Endothelial cell of umbilical vein (primary cell): ENCODE measurements at regions of chr12 and their contacts with region 1.

Region 1: GRCh38 chr12:96164951-96165811 is 29.0 kb upstream of the ELK3 start:
- DNase-seq: peak; percentile 98
- H3K4me3 ChIP-seq: no peak overlapping the region
- H3K27ac ChIP-seq: peak overlapping the region; percentile 81
- H3K4me1 ChIP-seq: peaks cover 45% of the 10 kb centered on the region
- H3K27me3 ChIP-seq: no peaks in the 10 kb centered on the region
- CTCF ChIP-seq: no peak
- POLR2A ChIP-seq: peak; percentile 50

Region 2: DNA sequence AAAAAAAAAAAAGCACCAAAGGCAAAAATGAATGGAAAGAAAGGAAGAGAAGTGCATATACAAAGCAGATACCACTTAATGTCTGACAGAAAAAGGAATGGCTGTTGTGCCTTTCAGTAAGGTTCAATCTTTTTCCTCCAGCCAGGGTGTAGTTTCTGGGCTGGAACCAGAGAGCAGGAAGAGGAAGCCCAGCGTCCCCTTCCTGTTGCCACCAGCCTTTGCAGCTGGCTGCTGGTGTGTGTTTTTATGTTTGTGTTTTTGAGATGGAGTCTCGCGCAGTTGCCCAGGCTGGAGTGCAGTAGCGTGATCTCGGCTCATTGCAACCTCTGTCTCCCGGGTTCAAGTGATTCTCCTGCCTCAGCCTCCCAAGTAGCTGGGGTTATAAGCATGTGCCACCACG is 65.2 kb before region 1 on chr12:
- CTCF ChIA-PET with region 1: no interaction called
- POLR2A ChIA-PET with region 1: no interaction called
- dilution Hi-C with region 1: no loop called
- intact Hi-C with region 1: loop called (anchors 2 kb)
- DNase-seq: peak; percentile 61
- H3K4me3 ChIP-seq: no peak overlapping the region
- H3K27ac ChIP-seq: no peak overlapping the region
- H3K4me1 ChIP-seq: peaks cover 21% of the 10 kb centered on the region
- H3K27me3 ChIP-seq: no peaks in the 10 kb centered on the region
- CTCF ChIP-seq: no peak
- POLR2A ChIP-seq: no peak

Region 3: GRCh38 chr12:96120359-96121100 is 44.7 kb before region 1 on chr12:
- CTCF ChIA-PET with region 1: no interaction called
- POLR2A ChIA-PET with region 1: no interaction called
- dilution Hi-C with region 1: no loop called
- intact Hi-C with region 1: no loop called
- DNase-seq: no peak
- H3K4me3 ChIP-seq: no peak overlapping the region
- H3K27ac ChIP-seq: no peak overlapping the region
- H3K4me1 ChIP-seq: peaks cover 11% of the 10 kb centered on the region
- H3K27me3 ChIP-seq: no peaks in the 10 kb centered on the region
- CTCF ChIP-seq: no peak
- POLR2A ChIP-seq: no peak

Region 4: DNA sequence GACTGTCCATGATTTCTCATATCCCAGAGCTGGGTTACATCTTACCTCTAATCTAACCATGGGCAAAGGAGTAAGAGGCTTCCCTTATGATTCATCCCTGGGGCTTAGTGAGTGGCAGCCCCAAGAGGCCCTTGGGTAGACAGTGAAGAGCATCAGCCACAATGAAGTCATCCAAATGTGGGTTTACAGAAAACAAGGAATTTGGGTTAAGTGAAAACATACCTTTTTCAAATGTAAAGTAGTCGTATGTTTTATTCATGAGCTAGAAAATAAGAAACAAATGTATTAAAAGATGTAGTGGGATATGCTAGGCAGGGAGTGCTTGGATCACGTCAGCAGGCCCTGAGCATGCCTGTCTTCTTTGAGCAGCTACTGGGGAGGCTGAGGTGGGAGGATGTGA is 25.0 kb before region 1 on chr12:
- CTCF ChIA-PET with region 1: interaction called, 4 read pairs
- POLR2A ChIA-PET with region 1: no interaction called
- dilution Hi-C with region 1: no loop called
- intact Hi-C with region 1: loop called (anchors 1 kb)
- DNase-seq: no peak
- H3K4me3 ChIP-seq: no peak overlapping the region
- H3K27ac ChIP-seq: no peak overlapping the region
- H3K4me1 ChIP-seq: peaks cover 63% of the 10 kb centered on the region
- H3K27me3 ChIP-seq: no peaks in the 10 kb centered on the region
- CTCF ChIP-seq: no peak
- POLR2A ChIP-seq: no peak

Region 5: GRCh38 chr12:96177013-96177412 is 11.8 kb after region 1 on chr12:
- CTCF ChIA-PET with region 1: interaction called, 10 read pairs
- POLR2A ChIA-PET with region 1: no interaction called
- dilution Hi-C with region 1: no loop called
- intact Hi-C with region 1: no loop called
- DNase-seq: peak; percentile 91
- H3K4me3 ChIP-seq: no peak overlapping the region
- H3K27ac ChIP-seq: peak overlapping the region; percentile 2
- H3K4me1 ChIP-seq: peaks cover 14% of the 10 kb centered on the region
- H3K27me3 ChIP-seq: no peaks in the 10 kb centered on the region
- CTCF ChIP-seq: no peak
- POLR2A ChIP-seq: no peak

Region 6: DNA sequence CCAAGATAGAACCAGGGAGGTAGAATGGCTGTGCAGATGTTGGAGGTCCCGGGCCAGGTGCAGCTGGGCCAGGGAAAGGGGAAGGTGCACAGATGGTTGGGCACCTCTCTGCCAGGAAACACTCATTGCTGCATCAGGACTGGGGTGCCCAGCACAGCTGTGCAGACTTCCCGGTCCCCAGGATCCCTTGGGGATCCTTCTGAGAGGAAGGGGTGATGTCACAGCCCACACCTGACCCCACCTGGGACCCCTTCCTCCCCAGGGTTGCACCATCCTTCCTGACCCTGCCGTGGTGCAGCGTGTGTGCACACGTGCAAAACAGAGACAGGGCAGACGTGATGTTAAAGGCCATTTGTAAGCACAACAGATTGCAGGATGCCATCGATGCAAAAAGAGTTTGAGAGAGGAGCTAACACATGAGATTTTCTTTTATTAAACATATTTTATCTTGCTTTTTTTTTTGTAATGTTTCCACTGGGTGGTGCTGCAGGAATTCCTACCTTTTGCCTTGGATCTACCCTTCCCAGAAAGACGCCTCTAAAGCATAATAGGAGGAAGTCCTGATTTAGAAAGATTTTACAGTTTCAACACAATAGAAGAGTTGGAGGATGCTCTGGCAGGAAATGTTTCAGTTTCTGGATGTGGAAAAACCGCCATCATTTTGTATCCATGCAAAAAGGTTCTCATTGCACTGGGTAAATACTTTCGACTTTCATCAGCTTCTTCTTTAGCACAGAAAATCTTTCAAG is 43.8 kb after region 1 on chr12:
- CTCF ChIA-PET with region 1: interaction called, 5 read pairs
- POLR2A ChIA-PET with region 1: interaction called, 5 read pairs
- dilution Hi-C with region 1: no loop called
- intact Hi-C with region 1: loop called (anchors 1 kb)
- DNase-seq: peak; percentile 91
- H3K4me3 ChIP-seq: no peak overlapping the region
- H3K27ac ChIP-seq: peak overlapping the region; percentile 82
- H3K4me1 ChIP-seq: peaks cover 100% of the 10 kb centered on the region
- H3K27me3 ChIP-seq: no peaks in the 10 kb centered on the region
- CTCF ChIP-seq: peak in 1 of 2 donors; percentile 18
- POLR2A ChIP-seq: no peak

Region 7: GRCh38 chr12:96219698-96220206 is 54.6 kb after region 1 on chr12:
- CTCF ChIA-PET with region 1: interaction called, 4 read pairs
- POLR2A ChIA-PET with region 1: no interaction called
- dilution Hi-C with region 1: no loop called
- intact Hi-C with region 1: loop called (anchors 1 kb)
- DNase-seq: peak; percentile 96
- H3K4me3 ChIP-seq: no peak overlapping the region
- H3K27ac ChIP-seq: peak overlapping the region; percentile 90
- H3K4me1 ChIP-seq: peaks cover 93% of the 10 kb centered on the region
- H3K27me3 ChIP-seq: no peaks in the 10 kb centered on the region
- CTCF ChIP-seq: no peak
- POLR2A ChIP-seq: peak; percentile 63

Region 8: DNA sequence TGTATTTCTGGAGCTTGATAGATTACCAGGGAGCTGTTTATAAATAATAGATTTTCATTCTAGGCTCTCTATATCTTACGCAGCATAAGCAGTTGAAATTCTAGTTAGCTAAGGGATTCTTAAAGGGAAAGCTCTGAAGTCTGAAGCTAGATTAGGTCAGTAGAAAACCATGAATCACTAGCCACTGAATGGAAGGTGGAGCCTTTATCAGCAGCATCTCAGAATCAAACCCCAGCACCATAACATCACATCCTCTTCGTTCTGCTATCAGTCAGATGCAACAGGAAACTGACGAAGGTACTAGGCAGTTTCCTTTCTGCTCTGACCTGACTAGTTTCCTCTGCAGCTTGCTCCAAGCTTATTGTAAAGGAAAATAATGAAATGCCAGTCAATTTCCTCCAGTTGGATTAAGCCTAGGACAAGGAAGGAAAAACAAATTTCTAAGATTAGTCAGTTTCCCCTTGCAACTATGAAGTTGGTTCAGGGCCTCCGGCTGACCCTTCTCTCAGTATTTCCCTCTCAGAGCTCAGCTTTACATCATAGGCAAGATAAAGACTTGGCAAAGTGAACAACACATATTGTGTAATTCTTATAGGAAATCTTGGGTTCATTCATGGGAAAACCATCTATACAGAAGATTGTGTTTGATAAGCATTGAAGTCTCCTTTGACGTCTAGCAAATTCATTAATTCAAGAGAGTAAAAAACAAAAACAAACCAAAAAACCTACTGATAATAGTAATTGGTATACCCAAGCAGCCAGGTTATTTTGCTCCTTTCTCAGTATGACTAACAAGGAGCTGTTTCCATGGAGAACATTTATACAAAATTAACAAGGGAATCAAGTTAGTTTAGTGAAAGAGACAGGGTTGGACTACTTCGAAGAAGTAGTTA is 280.8 kb after region 1 on chr12:
- CTCF ChIA-PET with region 1: no interaction called
- POLR2A ChIA-PET with region 1: no interaction called
- dilution Hi-C with region 1: no loop called
- intact Hi-C with region 1: no loop called
- DNase-seq: peak; percentile 100
- H3K4me3 ChIP-seq: no peak overlapping the region
- H3K27ac ChIP-seq: peak overlapping the region; percentile 99
- H3K4me1 ChIP-seq: peaks cover 51% of the 10 kb centered on the region
- H3K27me3 ChIP-seq: no peaks in the 10 kb centered on the region
- CTCF ChIP-seq: no peak
- POLR2A ChIP-seq: peak; percentile 88